Ovary (tissue), 10 donors: ENCODE measurements at regions of chr18 and their contacts with region 1.

Region 1: GRCh38 chr18:21851327-21851972 is 110.9 kb downstream of the MIB1 start:
- DNase-seq: no peak
- H3K4me3 ChIP-seq: no peak overlapping the region
- H3K27ac ChIP-seq: no peak overlapping the region
- H3K4me1 ChIP-seq: no peaks in the 10 kb centered on the region
- H3K27me3 ChIP-seq: no peaks in the 10 kb centered on the region
- CTCF ChIP-seq: peak in 1 of 3 donors; percentile 24
- EP300 ChIP-seq: no peak
- POLR2A ChIP-seq: no peak

Region 2: DNA sequence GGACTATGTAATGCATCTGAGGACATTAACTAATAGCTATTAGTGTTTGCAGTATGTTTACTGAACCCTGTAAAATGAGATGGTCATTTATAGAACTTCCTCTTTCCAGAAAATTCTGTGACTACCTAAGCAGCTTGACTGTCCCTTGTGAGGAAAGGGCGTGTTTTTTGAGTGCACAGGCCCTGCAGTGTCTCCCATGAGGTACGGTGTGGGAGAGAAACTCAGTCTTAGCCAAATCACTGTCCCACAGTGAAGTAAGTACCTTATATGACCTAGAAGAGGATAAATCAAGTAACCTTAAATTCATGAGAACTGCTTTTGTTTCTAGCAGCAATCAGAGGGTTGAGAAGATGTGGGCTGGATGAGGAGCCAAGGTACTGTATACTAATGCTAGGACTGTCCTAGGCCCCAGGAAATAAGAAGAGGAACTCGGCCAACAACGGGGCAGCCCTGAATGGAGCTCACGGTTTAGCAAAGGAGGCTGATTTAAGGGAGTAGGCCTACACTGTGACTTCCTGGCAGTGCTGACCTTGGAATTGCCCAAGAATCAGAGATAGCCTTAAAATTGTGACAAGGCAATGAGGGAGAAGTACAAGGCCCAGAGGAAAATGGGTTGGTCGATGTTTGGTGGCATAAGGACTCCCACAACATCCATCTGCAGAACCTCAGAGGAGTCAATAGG is 669.7 kb after region 1 on chr18:
- intact Hi-C with region 1: loop called in 1 of 4 experiments (anchors 5 kb)
- DNase-seq: no peak
- H3K4me3 ChIP-seq: no peak overlapping the region
- H3K27ac ChIP-seq: no peak overlapping the region
- H3K4me1 ChIP-seq: peaks cover 7% of the 10 kb centered on the region
- H3K27me3 ChIP-seq: no peaks in the 10 kb centered on the region
- CTCF ChIP-seq: no peak
- EP300 ChIP-seq: no peak
- POLR2A ChIP-seq: no peak